AG04450 (cell line): ENCODE measurements at regions of chr1 and their contacts with region 1.

Region 1: GRCh38 chr1:210360852-210361477 is 32.3 kb downstream of the HHAT start:
- DNase-seq: peak; percentile 44
- H3K4me3 ChIP-seq: no peak overlapping the region
- H3K27ac ChIP-seq: no peak overlapping the region
- H3K27me3 ChIP-seq: peaks cover 3% of the 10 kb centered on the region
- CTCF ChIP-seq: peak; percentile 89

Region 2: DNA sequence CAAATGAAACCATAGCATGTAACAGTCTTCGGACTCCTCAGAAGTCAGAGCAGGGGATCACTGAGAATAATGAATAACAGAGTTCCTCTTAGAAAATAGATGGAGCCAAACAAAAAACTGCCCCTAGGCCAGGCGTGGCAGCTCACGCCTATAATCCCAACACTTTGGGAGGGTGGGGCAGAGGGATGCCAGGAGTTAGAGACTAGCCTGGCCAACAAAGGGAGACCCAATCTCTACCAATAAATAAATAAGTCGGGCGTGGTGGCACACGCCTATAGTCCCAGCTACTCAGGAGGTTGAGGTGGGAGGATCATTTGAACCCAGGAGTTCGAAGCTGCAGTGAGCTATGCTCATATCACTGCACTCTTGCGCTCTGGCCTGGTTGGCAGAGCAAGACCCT is 186.8 kb before region 1 on chr1:
- CTCF ChIA-PET with region 1: interaction called, 15 read pairs
- POLR2A ChIA-PET with region 1: no interaction called
- DNase-seq: no peak
- H3K4me3 ChIP-seq: no peak overlapping the region
- H3K27ac ChIP-seq: no peak overlapping the region
- H3K27me3 ChIP-seq: no peaks in the 10 kb centered on the region
- CTCF ChIP-seq: no peak

Region 3: GRCh38 chr1:210342986-210343780 is 17.8 kb before region 1 on chr1:
- CTCF ChIA-PET with region 1: interaction called, 49 read pairs
- POLR2A ChIA-PET with region 1: no interaction called
- DNase-seq: no peak
- H3K4me3 ChIP-seq: peak overlapping the region; percentile 49
- H3K27ac ChIP-seq: no peak overlapping the region
- H3K27me3 ChIP-seq: peaks cover 5% of the 10 kb centered on the region
- CTCF ChIP-seq: no peak

Region 4: DNA sequence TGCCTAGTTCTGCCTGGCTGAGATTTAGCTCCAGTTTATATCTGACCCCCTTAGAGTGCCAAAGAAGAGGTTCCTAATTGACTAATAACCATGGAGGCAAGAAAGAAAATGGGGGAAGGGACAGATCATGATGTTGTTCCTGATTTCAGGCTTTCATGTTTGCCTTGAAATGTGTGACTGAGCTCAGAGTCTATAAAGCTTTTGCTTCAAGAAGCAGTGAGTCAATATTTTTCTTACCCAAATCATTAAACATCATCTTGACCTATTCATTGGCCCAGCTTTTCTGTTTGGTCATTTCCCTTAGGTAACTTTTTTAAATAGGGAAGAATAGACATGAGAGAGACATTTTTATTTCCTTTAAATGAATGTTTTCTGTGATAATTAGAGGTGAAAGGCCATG is 23.7 kb after region 1 on chr1:
- CTCF ChIA-PET with region 1: interaction called, 176 read pairs
- POLR2A ChIA-PET with region 1: no interaction called
- DNase-seq: no peak
- H3K4me3 ChIP-seq: no peak overlapping the region
- H3K27ac ChIP-seq: no peak overlapping the region
- H3K27me3 ChIP-seq: no peaks in the 10 kb centered on the region
- CTCF ChIP-seq: no peak

Region 5: GRCh38 chr1:210400043-210400840 is 39.3 kb after region 1 on chr1:
- CTCF ChIA-PET with region 1: interaction called, 223 read pairs
- POLR2A ChIA-PET with region 1: no interaction called
- DNase-seq: peak; percentile 33
- H3K4me3 ChIP-seq: no peak overlapping the region
- H3K27ac ChIP-seq: no peak overlapping the region
- H3K27me3 ChIP-seq: no peaks in the 10 kb centered on the region
- CTCF ChIP-seq: peak; percentile 97